ENCODE measurements at regions of chr7 and their contacts with region 1.

Region 1: GRCh38 chr7:98400542-98401340 is at the start of gene BAIAP2L1:
- DNase-seq: peak; percentile 83
- ATAC-seq: peak; percentile 99
- total RNA-seq, gene BAIAP2L1: 1.6 TPM

Region 2: DNA sequence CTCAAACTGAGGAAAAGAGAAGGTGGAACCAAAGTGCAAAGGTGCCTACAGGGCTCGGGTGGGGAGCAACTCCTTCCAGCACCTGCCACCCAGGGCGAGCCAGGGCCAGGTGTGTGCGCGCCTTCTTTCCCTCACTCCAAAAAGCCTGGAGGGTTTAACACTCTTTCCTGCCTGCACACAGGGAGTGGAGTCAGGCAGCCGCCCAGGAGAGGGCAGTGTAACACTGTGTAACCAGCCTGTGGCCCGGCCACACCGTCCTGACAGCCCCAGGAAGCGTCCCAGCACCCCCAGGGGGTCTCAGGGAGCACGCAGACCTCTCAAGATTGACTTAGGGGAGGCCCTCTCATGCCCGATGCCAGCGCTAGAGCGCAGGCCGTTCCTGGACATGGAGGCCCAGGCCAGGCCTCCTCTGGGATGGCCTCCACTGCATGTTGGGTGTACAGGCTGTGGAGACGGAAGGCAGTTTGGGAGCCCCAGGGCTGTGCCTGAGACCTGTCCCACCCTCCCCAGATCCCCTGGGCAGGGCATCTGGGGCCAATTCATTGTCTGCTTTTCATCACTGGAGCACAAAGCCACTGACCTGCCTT is 105.9 kb before region 1 on chr7:
- intact Hi-C with region 1: loop called (anchors 5 kb)
- DNase-seq: peak; percentile 59
- ATAC-seq: peak; percentile 61

Measured in Right ventricle myocardium superior (tissue), 1 donor.